Activated T-helper 2 cell treated with anti-CD3 and anti-CD28 coated beads, Interferon-gamma antibody, Interleukin-2, Interleukin-4, amounts not matched to agents 10 μg/mL and 5 μg/mL and 100 μg/mL, durations not matched to agents 14 hours and 24 hours and 36 hours (primary cell): ENCODE measurements at regions of chr11 and their contacts with region 1.

Region 1: DNA sequence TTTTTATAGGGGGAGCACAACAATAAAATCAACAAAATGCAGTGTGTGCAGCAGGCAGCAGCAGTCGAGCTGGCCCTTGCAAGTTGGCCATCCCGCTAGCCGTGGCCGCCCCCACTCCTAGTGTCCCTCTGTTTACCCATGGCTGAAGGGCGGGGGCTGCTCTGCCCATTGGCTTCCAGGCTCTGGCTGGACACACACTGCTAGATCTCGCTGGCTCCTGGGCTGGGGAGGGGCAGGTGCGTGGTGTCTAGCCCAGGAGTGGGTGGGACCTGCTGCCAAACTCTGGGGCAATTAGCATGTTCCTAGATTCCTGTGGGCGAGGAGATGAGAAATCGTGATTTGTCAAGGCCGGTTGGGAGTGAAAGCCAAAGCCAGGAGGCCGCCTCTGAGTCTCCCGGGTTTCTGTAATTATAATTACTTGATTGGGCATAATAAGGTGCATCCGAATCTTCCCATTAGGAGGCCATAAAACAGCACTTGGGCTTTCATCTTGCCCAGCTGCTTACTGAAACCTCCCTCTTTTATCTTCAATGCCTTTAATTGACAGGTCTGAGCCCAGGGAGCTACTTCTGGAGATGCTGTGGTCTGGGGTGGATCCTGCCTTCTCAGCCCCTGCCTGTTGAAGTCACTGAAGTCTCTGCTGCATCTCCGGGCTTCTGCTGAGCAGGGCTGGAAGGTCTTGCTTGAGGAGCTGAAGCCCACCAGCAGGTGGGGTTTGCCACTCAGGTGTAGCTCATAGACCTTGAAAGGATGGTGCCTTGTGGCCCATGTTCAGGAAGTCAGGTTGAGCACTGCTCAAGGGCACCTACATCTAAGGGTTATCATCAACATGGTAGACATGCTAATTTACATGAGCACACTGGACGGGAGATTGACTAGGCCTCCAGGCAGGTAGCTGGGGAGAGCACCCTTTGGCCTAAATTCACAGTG is 44.5 kb upstream of the DKK3 start:
- DNase-seq: no peak
- H3K4me3 Mint-ChIP-seq: no peak overlapping the region
- H3K27ac Mint-ChIP-seq: no peak overlapping the region
- H3K4me1 Mint-ChIP-seq: peaks cover 14% of the 10 kb centered on the region
- H3K27me3 Mint-ChIP-seq: no peaks in the 10 kb centered on the region

Region 2: DNA sequence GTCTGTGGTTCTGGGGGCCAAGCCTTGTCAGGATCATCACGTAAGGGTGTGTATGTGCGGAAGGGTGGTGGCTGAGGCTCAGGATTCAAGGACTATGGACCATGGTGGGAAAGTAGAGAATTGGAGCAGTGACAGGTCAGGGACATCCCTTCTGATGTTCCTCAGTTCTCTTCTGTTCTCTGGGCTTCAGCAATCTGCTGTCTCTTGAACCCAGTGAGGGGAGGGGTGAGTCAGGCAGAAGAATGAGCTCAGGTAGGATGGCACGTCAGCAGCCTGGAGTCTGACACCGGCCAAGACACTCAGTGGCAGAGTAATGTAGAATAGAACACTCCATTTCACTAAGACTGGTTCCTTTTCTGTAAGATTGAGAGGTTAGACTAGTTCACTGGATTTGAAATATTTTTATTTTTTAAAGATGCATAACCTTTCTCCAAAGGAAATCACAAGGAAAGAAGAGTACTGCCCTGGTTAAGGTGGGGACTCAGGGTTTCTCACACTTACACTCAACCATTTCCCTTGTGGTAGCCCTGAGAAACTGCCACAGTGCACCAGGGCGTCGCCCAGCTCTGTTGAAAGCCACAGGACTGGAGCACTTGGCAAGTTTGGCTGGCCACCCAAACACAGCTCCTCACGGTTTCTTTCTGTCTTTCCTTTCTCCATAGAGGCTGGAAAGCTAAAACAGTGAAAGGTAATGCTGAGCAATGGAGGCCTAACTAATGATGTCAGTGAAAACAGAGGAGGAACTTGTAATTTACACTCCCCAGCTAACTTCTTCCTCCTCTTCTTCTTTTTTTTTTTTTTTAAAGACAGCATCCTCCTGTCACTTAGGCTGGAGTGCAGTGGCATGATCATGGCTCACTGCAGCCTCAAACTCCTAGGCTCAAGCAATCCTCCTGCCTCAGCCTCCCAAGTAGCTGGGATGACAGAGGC is 34.4 kb after region 1 on chr11:
- intact Hi-C with region 1: loop called (anchors 5 kb)
- DNase-seq: peak; percentile 58
- H3K4me3 Mint-ChIP-seq: no peak overlapping the region
- H3K27ac Mint-ChIP-seq: peak overlapping the region; percentile 74
- H3K4me1 Mint-ChIP-seq: peaks cover 64% of the 10 kb centered on the region
- H3K27me3 Mint-ChIP-seq: no peaks in the 10 kb centered on the region